ENCODE measurements at regions of chr15 and their contacts with region 1.

Region 1: GRCh38 chr15:36877796-36878683 is 222.3 kb downstream of the MEIS2 start:
- DNase-seq: peak in 1 of 2 donors; percentile 28
- ATAC-seq: peak; percentile 50 to 76 (median 70)
- H3K4me3 ChIP-seq: peak overlapping the region in 9 of 10 donors; percentile 25 to 46 (median 42)
- H3K27ac ChIP-seq: peak overlapping the region in 6 of 10 donors; percentile 29 to 62 (median 38)
- H3K4me1 ChIP-seq: peaks cover 0 to 14% (median 7%) of the 10 kb centered on the region in 9 donors
- H3K27me3 ChIP-seq: peaks cover 0 to 92% (median 36%) of the 10 kb centered on the region in 7 donors
- CTCF ChIP-seq: peak in 1 of 9 donors; percentile 22

Region 2: GRCh38 chr15:36826948-36827347 is 51.1 kb before region 1 on chr15:
- intact Hi-C with region 1: loop called in 1 of 10 experiments (anchors 10 kb)
- DNase-seq: no peak
- ATAC-seq: no peak
- H3K4me3 ChIP-seq: no peak overlapping the region
- H3K27ac ChIP-seq: no peak overlapping the region
- H3K4me1 ChIP-seq: peaks cover 0 to 11% (median 0%) of the 10 kb centered on the region in 9 donors
- H3K27me3 ChIP-seq: no peaks in the 10 kb centered on the region
- CTCF ChIP-seq: no peak